IMR-90 (cell line): ENCODE measurements at regions of chr14 and their contacts with region 1.

Region 1: GRCh38 chr14:53539489-53540126 is 386.5 kb upstream of the DDHD1 start:
- DNase-seq: peak; percentile 83
- ATAC-seq: peak; percentile 77
- H3K4me3 ChIP-seq: no peak overlapping the region
- H3K27ac ChIP-seq: peak overlapping the region; percentile 64; the same call in 1 of the 2 replicates
- H3K4me1 ChIP-seq: peaks cover 20% of the 10 kb centered on the region
- H3K27me3 ChIP-seq: no peaks in the 10 kb centered on the region
- CTCF ChIP-seq: peak; percentile 90
- POLR2A ChIP-seq: no peak
- RAD21 ChIP-seq: peak; percentile 89

Region 2: GRCh38 chr14:53368711-53369191 is 170.9 kb before region 1 on chr14:
- CTCF ChIA-PET with region 1: no interaction called
- POLR2A ChIA-PET with region 1: no interaction called
- dilution Hi-C with region 1: no loop called
- in situ Hi-C with region 1: no loop called
- intact Hi-C with region 1: loop called (anchors 5 kb)
- DNase-seq: peak; percentile 88
- ATAC-seq: peak; percentile 81
- H3K4me3 ChIP-seq: no peak overlapping the region
- H3K27ac ChIP-seq: no peak overlapping the region
- H3K4me1 ChIP-seq: peaks cover 17% of the 10 kb centered on the region
- H3K27me3 ChIP-seq: peaks cover 2% of the 10 kb centered on the region; the same call in 1 of the 2 replicates
- CTCF ChIP-seq: no peak
- POLR2A ChIP-seq: no peak
- RAD21 ChIP-seq: no peak

Region 3: GRCh38 chr14:53432378-53432802 is 107.2 kb before region 1 on chr14:
- CTCF ChIA-PET with region 1: interaction called, 10 read pairs
- POLR2A ChIA-PET with region 1: no interaction called
- dilution Hi-C with region 1: no loop called
- in situ Hi-C with region 1: no loop called
- intact Hi-C with region 1: loop called (anchors 1 kb)
- DNase-seq: peak; percentile 60
- ATAC-seq: peak; percentile 94
- H3K4me3 ChIP-seq: no peak overlapping the region
- H3K27ac ChIP-seq: peak overlapping the region; percentile 3; the same call in 1 of the 2 replicates
- H3K4me1 ChIP-seq: peaks cover 6% of the 10 kb centered on the region
- H3K27me3 ChIP-seq: no peaks in the 10 kb centered on the region
- CTCF ChIP-seq: peak; percentile 71
- POLR2A ChIP-seq: no peak
- RAD21 ChIP-seq: peak; percentile 83

Region 4: DNA sequence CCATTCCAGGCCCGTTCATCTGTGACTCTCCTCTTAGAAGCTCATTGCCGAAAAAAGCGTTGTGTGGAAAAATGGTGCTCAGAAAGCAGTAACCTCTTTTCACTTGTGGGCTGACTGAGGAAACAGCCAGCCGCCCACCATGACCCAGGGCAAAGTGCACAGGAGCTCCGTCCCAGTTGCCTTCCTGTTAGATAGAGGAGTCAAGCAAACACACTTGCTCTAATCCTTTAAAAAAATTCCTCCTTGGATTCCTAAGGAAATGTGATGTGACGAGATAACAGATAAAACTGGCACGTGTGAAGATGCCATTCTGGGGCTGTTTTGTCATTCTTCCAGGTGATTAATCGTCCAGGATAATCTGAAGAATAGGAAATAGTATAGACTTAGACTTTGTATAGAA is 10.3 kb after region 1 on chr14:
- CTCF ChIA-PET with region 1: no interaction called
- POLR2A ChIA-PET with region 1: no interaction called
- dilution Hi-C with region 1: no loop called
- in situ Hi-C with region 1: no loop called
- intact Hi-C with region 1: no loop called
- DNase-seq: no peak
- ATAC-seq: no peak
- H3K4me3 ChIP-seq: no peak overlapping the region
- H3K27ac ChIP-seq: no peak overlapping the region
- H3K4me1 ChIP-seq: no peaks in the 10 kb centered on the region
- H3K27me3 ChIP-seq: peaks cover 3% of the 10 kb centered on the region; the same call in 1 of the 2 replicates
- CTCF ChIP-seq: no peak
- POLR2A ChIP-seq: no peak
- RAD21 ChIP-seq: no peak

Region 5: GRCh38 chr14:53663709-53664108 is 124.1 kb after region 1 on chr14:
- CTCF ChIA-PET with region 1: no interaction called
- POLR2A ChIA-PET with region 1: no interaction called
- dilution Hi-C with region 1: no loop called
- in situ Hi-C with region 1: no loop called
- intact Hi-C with region 1: loop called (anchors 5 kb)
- DNase-seq: peak; percentile 9
- ATAC-seq: peak; percentile 57
- H3K4me3 ChIP-seq: no peak overlapping the region
- H3K27ac ChIP-seq: no peak overlapping the region
- H3K4me1 ChIP-seq: no peaks in the 10 kb centered on the region
- H3K27me3 ChIP-seq: peaks cover 6% of the 10 kb centered on the region
- CTCF ChIP-seq: peak; percentile 38; the same call in 1 of the 2 replicates
- POLR2A ChIP-seq: no peak
- RAD21 ChIP-seq: peak; percentile 51

Region 6: GRCh38 chr14:54001189-54001913 is 461.7 kb after region 1 on chr14:
- CTCF ChIA-PET with region 1: no interaction called
- POLR2A ChIA-PET with region 1: no interaction called
- dilution Hi-C with region 1: no loop called
- in situ Hi-C with region 1: no loop called
- intact Hi-C with region 1: loop called (anchors 1 kb)
- DNase-seq: no peak
- ATAC-seq: no peak
- H3K4me3 ChIP-seq: no peak overlapping the region
- H3K27ac ChIP-seq: no peak overlapping the region
- H3K4me1 ChIP-seq: peaks cover 19% of the 10 kb centered on the region
- H3K27me3 ChIP-seq: no peaks in the 10 kb centered on the region
- CTCF ChIP-seq: no peak
- POLR2A ChIP-seq: no peak
- RAD21 ChIP-seq: no peak

Region 7: GRCh38 chr14:54329082-54329695 is 789.6 kb after region 1 on chr14:
- CTCF ChIA-PET with region 1: interaction called, 3 read pairs
- POLR2A ChIA-PET with region 1: no interaction called
- dilution Hi-C with region 1: no loop called
- in situ Hi-C with region 1: loop called (anchors 5 kb)
- intact Hi-C with region 1: no loop called
- DNase-seq: peak; percentile 61
- ATAC-seq: peak; percentile 99
- H3K4me3 ChIP-seq: no peak overlapping the region
- H3K27ac ChIP-seq: no peak overlapping the region
- H3K4me1 ChIP-seq: no peaks in the 10 kb centered on the region
- H3K27me3 ChIP-seq: peaks cover 12% of the 10 kb centered on the region
- CTCF ChIP-seq: peak; percentile 79
- POLR2A ChIP-seq: no peak
- RAD21 ChIP-seq: peak; percentile 86

Region 8: GRCh38 chr14:54347997-54348611 is 808.5 kb after region 1 on chr14:
- CTCF ChIA-PET with region 1: interaction called, 8 read pairs
- POLR2A ChIA-PET with region 1: no interaction called
- dilution Hi-C with region 1: no loop called
- in situ Hi-C with region 1: no loop called
- intact Hi-C with region 1: loop called (anchors 1 kb)
- DNase-seq: peak; percentile 47
- ATAC-seq: peak; percentile 71
- H3K4me3 ChIP-seq: no peak overlapping the region
- H3K27ac ChIP-seq: no peak overlapping the region
- H3K4me1 ChIP-seq: peaks cover 5% of the 10 kb centered on the region; the same call in 1 of the 2 replicates
- H3K27me3 ChIP-seq: 0 out of 2 replicates have a peak, but pooled peaks cover 2% of the 10 kb centered on the region
- CTCF ChIP-seq: peak; percentile 77
- POLR2A ChIP-seq: no peak
- RAD21 ChIP-seq: peak; percentile 84